Psoas muscle (tissue), 8 donors: ENCODE measurements at regions of chr1 and their contacts with region 1.

Region 1: GRCh38 chr1:151472856-151473731 is 13.8 kb upstream of the POGZ start:
- DNase-seq: peak; percentile 35 to 61
- ATAC-seq: peak; percentile 67 to 88 (median 74)
- H3K4me3 ChIP-seq: peak overlapping the region; percentile 80
- H3K27ac ChIP-seq: peak overlapping the region; percentile 69
- H3K4me1 ChIP-seq: no peaks in the 10 kb centered on the region
- H3K27me3 ChIP-seq: no peaks in the 10 kb centered on the region
- CTCF ChIP-seq: no peak

Region 2: DNA sequence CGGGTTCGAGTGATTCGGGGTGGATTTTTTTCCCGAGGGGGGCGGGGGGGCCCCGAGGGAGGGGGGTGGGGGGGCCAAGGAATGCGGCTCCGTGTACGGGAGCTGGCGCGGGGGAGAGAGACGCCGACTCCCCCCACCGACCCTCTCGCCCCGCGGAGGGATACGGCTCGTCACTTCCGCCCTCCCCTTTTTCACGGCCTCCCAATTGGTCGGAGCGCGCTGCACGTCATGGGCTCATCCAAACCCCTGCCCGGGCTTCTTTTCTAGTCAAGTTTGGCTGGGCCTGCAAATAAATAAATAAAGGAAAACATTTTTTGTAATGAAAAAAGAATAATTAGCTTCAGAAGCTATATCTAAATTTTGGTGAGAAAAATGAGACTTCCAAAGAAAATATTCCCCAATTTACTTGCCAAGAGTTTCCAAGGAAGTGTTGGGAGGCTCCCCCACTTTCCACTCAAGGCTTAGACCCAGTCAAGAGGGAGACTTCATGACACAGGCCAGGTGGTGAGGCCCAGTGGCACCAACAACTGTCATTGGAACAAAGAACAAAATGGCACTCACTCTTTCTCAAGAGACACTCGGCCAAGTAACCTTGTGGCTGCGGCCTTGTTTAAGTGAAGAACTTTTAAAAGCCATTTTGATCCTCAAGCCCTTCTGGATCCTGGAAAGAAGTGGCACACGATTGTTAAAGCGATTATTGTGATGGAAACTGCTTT is 13.6 kb before region 1 on chr1 and contains the start of gene POGZ:
- intact Hi-C with region 1: loop called (anchors 1 to 2 kb)
- DNase-seq: peak; percentile 98
- ATAC-seq: peak; percentile 96 to 98 (median 98)
- H3K4me3 ChIP-seq: peak within 1 kb of the TSS; percentile 84
- H3K27ac ChIP-seq: peak within 1 kb of the TSS; percentile 93
- H3K4me1 ChIP-seq: peaks cover 15% of the 10 kb centered on the region
- H3K27me3 ChIP-seq: no peaks in the 10 kb centered on the region
- CTCF ChIP-seq: no peak
- total RNA-seq, gene POGZ: 26.5 to 45.1 (median 41.8) TPM

Region 3: DNA sequence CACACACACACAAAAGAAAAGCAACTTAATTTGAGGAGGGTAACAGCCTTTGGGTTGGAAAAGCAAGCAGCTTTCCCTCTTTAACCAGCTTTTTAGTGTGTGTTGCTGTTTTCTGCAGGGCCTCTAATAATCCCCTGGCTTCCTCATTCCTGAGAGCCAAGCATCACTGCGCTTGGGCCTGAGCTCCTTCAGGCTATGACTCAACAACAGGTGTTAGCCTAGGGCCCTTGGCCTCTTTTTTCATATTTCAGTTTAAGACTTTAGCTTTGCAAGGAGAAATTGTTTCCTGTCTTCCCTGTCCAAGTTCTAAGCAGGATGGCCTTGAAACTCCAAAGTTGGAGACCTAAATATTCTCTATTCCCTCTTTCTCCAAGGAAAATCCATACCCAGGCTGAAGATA is 112.5 kb after region 1 on chr1:
- intact Hi-C with region 1: no loop called
- DNase-seq: no peak
- ATAC-seq: peak in 3 of 4 donors; percentile 46 to 66 (median 49)
- H3K4me3 ChIP-seq: no peak overlapping the region
- H3K27ac ChIP-seq: no peak overlapping the region
- H3K4me1 ChIP-seq: no peaks in the 10 kb centered on the region
- H3K27me3 ChIP-seq: no peaks in the 10 kb centered on the region
- CTCF ChIP-seq: no peak